Prostate gland (tissue), 2 donors: ENCODE measurements at regions of chr17 and their contacts with region 1.

Region 1: DNA sequence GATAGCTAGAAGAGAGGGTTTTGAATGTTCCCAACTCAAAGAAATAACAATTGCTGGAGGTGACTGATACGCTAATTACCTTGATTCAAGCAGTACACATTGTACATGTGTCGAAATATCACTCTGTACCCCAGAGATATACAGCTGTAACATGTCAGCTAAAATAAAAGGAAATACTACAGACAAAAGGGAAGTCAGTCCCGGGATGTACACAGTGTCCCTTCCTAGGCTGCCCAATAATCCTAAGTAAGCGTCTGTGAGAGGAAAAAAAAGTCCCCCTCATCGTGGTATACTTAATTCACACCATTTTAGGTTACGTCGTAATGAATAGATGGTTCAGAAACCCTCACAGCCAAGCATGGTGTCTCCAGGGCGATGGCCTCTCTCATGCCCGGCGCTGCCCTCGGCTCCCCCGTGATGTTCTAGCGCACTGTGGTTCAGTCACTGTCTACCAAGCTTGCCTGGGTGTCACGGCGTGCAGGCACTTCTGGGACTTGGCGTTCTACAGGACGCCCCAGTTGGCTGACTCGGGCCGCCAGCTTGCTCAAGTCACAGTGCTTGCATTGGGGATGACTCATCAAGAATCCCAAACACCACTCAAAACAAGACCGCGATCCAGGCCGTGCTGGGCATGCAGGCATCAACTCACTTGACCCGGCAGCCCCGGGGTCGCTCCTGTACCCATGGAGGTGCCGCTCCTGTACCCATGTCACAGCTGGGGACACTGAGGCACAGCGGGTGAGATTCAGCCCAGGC is 27.6 kb downstream of the CCDC40 start:
- DNase-seq: peak; percentile 23
- H3K4me3 ChIP-seq: no peak overlapping the region
- H3K27ac ChIP-seq: peak overlapping the region; percentile 64 to 66
- H3K4me1 ChIP-seq: peaks cover 16% of the 10 kb centered on the region
- H3K27me3 ChIP-seq: no peaks in the 10 kb centered on the region
- CTCF ChIP-seq: no peak
- POLR2A ChIP-seq: no peak

Region 2: DNA sequence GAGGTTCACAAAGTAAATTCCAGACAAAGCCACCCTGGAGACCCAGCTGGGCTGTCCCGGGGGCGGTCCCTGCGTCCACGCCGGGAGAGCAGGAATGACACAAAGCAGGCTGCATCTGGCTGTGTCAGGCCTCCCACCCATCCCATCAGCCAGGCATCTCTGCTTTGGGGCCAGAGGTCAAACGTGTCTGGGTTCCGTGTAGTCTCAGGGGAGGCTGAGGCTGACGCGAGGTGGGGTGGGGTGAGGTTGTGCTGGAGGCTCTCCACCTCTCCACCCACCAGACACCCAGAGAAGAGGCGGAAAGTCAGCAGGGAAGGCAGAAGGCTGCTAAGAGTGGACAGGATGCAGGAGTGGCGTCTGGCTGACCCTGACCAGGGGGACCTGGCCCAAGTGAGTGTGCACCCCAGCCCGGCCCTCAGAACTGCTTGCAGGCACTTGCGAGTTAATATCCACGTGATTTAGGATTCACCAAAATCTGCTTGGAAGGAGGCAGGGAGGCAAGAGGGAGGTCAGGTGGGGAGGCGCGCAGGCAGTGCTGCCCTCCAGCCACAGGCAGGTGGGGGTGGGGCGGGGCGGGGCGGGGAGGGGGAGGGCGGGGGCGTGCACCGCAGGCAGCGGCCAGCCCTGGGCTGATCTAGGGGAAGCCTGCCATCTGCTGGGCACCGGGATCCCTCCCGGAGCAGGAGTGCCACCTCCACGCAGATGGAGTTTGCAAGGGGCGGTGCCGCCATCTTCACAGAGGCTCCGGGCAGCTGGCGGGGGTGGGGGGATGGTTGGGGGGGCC is 72.7 kb before region 1 on chr17:
- intact Hi-C with region 1: no loop called
- DNase-seq: peak; percentile 89
- H3K4me3 ChIP-seq: peak overlapping the region; percentile 18 to 36
- H3K27ac ChIP-seq: peak overlapping the region; percentile 76 to 90
- H3K4me1 ChIP-seq: peaks cover 43% of the 10 kb centered on the region
- H3K27me3 ChIP-seq: no peaks in the 10 kb centered on the region
- CTCF ChIP-seq: peak; percentile 38 to 83 (median 65)
- POLR2A ChIP-seq: no peak

Region 3: DNA sequence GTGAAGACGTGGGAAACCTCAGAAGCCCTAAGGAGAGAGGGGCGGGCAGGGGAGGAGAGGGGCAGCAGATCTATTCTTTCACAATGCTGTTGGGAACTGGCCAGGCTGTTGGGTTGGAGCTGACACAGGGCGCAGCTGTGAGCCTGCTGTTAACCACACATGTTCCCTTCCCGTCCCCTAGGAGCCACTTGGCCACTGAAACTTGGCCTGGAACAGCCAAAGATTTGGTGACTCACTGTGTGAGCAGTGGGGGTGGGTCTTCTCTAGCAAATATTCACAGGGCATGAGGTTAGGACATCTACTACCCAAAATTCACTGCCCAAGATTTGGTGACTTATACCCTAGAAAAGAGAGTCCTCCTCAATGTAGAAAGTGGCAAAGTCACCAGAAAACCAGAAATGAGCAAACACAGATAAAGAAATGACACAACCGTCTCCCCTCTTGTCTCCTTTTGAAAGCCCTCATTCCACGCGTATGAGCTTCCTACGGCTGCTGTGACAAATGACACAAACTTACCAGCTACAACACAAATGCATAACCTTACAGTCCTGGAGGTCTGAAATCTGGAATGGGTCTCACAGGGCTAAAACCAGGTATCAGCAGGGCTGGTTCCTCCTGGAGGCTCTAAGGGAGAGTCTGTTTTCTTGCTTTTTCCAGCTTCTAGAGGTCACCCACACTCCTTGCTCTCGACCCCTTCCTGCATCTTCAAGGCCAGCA is 34.6 kb before region 1 on chr17:
- intact Hi-C with region 1: loop called (anchors 5 kb)
- DNase-seq: no peak
- H3K4me3 ChIP-seq: no peak overlapping the region
- H3K27ac ChIP-seq: peak overlapping the region; percentile 79 to 88
- H3K4me1 ChIP-seq: peaks cover 42% of the 10 kb centered on the region
- H3K27me3 ChIP-seq: no peaks in the 10 kb centered on the region
- CTCF ChIP-seq: no peak
- POLR2A ChIP-seq: no peak